Uterus (tissue), 4 donors: ENCODE measurements at regions of chr5 and their contacts with region 1.

Region 1: GRCh38 chr5:73215891-73216610 is 43.1 kb downstream of the TMEM174 start:
- DNase-seq: peak; percentile 53 to 72
- H3K4me3 ChIP-seq: peak overlapping the region; percentile 12 to 37
- H3K27ac ChIP-seq: no peak overlapping the region
- H3K4me1 ChIP-seq: no peaks in the 10 kb centered on the region
- H3K27me3 ChIP-seq: peaks cover 0 to 34% of the 10 kb centered on the region in 2 donors
- CTCF ChIP-seq: peak; percentile 75 to 83 (median 78)
- POLR2A ChIP-seq: no peak

Region 2: GRCh38 chr5:73039086-73039485 is 177.0 kb before region 1 on chr5:
- intact Hi-C with region 1: no loop called
- DNase-seq: no peak
- H3K4me3 ChIP-seq: no peak overlapping the region
- H3K27ac ChIP-seq: no peak overlapping the region
- H3K4me1 ChIP-seq: no peaks in the 10 kb centered on the region
- H3K27me3 ChIP-seq: no peaks in the 10 kb centered on the region
- CTCF ChIP-seq: no peak
- POLR2A ChIP-seq: no peak

Region 3: GRCh38 chr5:73160239-73160671 is 55.8 kb before region 1 on chr5:
- intact Hi-C with region 1: no loop called
- DNase-seq: no peak
- H3K4me3 ChIP-seq: no peak overlapping the region
- H3K27ac ChIP-seq: no peak overlapping the region
- H3K4me1 ChIP-seq: no peaks in the 10 kb centered on the region
- H3K27me3 ChIP-seq: no peaks in the 10 kb centered on the region
- CTCF ChIP-seq: no peak
- POLR2A ChIP-seq: no peak

Region 4: DNA sequence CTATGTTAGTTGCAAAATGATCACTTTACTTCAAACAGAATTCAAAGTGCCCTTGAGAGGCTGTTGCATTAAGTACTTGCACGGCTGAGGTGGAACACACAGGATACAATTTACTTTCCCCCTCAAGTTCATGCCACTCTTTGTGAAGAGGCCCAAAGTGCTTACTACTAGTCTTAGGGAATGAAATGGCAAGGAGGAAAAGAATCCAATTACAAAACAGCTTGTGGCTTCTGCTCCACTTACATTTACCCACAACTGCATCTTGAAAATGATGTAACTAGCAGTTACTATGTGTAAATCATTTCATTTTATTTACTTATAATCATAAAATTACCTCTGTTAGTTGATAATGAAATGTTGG is 217.9 kb after region 1 on chr5:
- intact Hi-C with region 1: no loop called
- DNase-seq: no peak
- H3K4me3 ChIP-seq: no peak overlapping the region
- H3K27ac ChIP-seq: no peak overlapping the region
- H3K4me1 ChIP-seq: peaks cover 0 to 14% of the 10 kb centered on the region in 2 donors
- H3K27me3 ChIP-seq: peaks cover 25 to 84% of the 10 kb centered on the region in 2 donors
- CTCF ChIP-seq: no peak
- POLR2A ChIP-seq: no peak

Region 5: DNA sequence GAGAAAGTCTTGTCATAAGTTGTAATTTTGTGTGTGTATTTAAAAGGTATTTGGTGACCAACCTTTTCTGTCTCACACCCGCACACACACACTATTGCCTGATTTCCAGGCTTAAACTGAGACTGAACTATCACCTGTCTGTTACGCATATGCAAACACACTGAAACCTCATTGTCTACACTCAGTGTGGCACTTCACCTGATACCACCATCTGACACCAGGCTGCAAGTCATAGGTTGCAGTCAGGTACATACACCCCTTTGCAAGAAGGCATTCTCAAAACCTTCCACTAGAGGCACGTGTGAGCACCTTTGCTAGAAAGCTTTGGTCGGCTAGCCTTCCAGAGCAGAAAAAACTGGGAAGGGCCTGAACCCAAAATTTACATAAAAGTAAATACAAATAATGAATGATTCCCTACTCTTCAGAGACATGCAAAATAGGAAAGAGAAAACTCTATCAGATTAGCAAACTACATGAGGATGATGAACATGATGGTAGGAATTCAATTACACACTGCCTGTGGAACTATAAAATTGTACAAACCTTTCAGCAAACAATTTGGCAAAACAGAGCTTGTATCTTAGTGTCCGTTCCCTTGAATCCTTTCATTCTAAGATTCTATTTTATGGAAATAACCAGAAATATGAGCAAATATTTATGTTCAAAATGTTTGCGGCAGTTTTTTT is 238.4 kb after region 1 on chr5:
- intact Hi-C with region 1: loop called (anchors 10 kb)
- DNase-seq: no peak
- H3K4me3 ChIP-seq: no peak overlapping the region
- H3K27ac ChIP-seq: no peak overlapping the region
- H3K4me1 ChIP-seq: no peaks in the 10 kb centered on the region
- H3K27me3 ChIP-seq: peaks cover 23 to 43% of the 10 kb centered on the region in 2 donors
- CTCF ChIP-seq: peak; percentile 15 to 47 (median 30)
- POLR2A ChIP-seq: no peak